HepG2 (cell line): ENCODE measurements at regions of chr7 and their contacts with region 1.

Region 1: DNA sequence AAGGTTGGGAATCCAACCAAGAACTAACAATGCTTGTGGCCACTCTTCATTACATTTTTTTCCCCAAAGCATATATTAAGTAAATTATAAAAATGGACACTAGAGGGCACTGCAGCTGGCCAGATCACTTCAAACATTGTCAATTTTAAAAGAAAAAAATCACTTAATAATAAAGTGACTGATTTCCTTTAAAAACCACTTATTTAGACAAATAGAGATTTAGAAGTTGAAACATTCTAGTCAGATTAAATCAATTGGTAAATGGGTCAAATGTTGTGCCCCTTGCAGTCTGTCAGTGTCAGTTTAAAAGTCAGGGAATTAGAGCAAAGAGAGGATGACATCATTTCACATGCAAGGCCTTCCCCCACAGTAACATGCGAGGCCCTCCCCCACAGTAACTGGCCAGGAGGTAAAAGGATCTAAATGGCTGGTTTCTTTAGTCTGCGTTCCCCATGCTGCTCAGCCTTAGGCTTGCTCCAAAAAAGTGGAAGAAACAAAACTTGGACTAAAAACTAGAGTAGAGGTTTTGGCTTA is 177.9 kb downstream of the SKAP2 start:
- DNase-seq: peak; percentile 68
- ATAC-seq: peak; percentile 68
- H3K4me3 ChIP-seq: no peak overlapping the region
- H3K27ac ChIP-seq: peak overlapping the region; percentile 33
- H3K4me1 ChIP-seq: peaks cover 48% of the 10 kb centered on the region
- H3K27me3 ChIP-seq: no peaks in the 10 kb centered on the region
- CTCF ChIP-seq: peak; percentile 58
- EP300 ChIP-seq: no peak
- POLR2A ChIP-seq: no peak
- RAD21 ChIP-seq: no peak

Region 2: DNA sequence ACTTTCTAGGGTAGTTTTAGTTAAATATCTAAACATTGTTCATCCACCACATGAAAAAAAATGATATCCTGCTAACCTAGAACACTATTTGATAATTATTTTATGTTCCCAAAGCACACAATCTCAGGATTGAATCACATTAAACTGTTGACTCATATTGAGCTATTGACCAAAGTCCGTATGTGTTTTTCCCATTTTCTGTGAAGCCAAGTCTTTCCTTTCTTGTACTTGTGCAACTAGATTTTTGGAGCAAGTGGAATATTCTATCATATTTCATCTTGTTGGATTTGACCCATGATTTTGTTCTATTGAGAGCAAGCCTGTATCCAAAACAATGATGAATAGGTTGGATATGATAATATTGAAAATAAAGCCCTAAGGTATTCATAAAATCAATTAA is 13.3 kb after region 1 on chr7:
- CTCF ChIA-PET with region 1: interaction called, 3 read pairs
- POLR2A ChIA-PET with region 1: interaction called, 14 read pairs
- in situ Hi-C with region 1: no loop called
- intact Hi-C with region 1: no loop called
- DNase-seq: peak; percentile 75
- ATAC-seq: no peak
- H3K4me3 ChIP-seq: no peak overlapping the region
- H3K27ac ChIP-seq: no peak overlapping the region
- H3K4me1 ChIP-seq: peaks cover 33% of the 10 kb centered on the region
- H3K27me3 ChIP-seq: no peaks in the 10 kb centered on the region
- CTCF ChIP-seq: no peak
- EP300 ChIP-seq: peak in 1 of 2 experiments; percentile 33; a peak in 1 of 4 replicates
- POLR2A ChIP-seq: no peak
- RAD21 ChIP-seq: no peak

Region 3: DNA sequence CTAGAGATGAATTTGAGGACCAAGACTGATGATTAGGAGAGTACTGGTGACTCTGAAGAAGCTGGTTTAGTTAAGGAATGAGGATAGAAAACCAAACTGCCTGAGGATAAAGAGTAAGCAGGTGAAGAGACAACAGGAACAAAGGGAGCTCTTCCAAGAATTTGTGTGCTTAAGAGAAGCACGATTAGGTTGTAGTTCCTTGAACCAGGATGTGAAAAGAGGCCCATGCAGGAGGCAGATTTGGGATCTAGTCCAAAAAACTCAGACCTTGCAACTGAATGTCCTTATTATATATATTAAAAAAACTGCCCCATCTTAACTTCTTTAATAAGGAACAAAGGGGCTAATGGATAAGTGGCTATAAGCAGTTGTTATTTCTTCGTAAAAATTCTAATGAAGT is 27.5 kb after region 1 on chr7:
- CTCF ChIA-PET with region 1: no interaction called
- POLR2A ChIA-PET with region 1: no interaction called
- in situ Hi-C with region 1: no loop called
- intact Hi-C with region 1: no loop called
- DNase-seq: no peak
- ATAC-seq: no peak
- H3K4me3 ChIP-seq: no peak overlapping the region
- H3K27ac ChIP-seq: no peak overlapping the region
- H3K4me1 ChIP-seq: no peaks in the 10 kb centered on the region
- H3K27me3 ChIP-seq: no peaks in the 10 kb centered on the region
- CTCF ChIP-seq: no peak
- EP300 ChIP-seq: no peak
- POLR2A ChIP-seq: no peak
- RAD21 ChIP-seq: no peak